ENCODE measurements at regions of chr7 and their contacts with region 1.

Region 1: DNA sequence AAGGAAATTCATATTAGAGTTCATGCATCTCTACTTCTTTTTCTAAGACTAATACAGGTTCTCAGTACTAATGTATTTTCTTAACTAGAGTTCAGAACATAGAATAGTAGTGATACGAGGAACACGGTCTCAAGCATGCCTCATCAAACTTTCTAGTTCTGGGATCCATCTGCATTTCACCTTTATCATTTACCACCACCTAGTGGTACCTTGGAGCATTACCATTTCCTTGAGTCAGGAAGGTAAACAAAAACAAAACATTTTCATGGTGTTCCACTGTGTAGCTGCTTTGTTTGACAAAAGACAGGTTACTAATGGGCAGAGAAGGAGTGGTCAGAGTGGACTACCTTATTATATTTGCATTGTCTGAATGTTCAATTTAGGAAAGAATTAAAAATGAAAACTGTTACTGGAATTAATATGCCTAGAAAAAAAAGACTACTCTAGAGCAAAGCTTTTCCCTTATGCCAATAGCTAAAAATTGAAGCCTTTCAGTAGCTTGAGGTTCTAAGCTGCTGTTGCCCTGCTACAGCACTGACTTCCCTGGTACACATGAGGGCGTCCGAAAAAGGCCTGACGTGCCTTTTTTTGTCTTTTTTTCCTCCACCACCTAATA is 44.5 kb downstream of the STARD3NL start:
- DNase-seq: peak; percentile 57
- ATAC-seq: peak; percentile 56
- H3K4me3 Mint-ChIP-seq: no peak overlapping the region
- H3K27ac Mint-ChIP-seq: no peak overlapping the region
- H3K4me1 Mint-ChIP-seq: peaks cover 76% of the 10 kb centered on the region
- H3K27me3 Mint-ChIP-seq: no peaks in the 10 kb centered on the region

Region 2: GRCh38 chr7:38360776-38361175 is 138.2 kb after region 1 on chr7:
- CTCF ChIA-PET with region 1: interaction called, 346 read pairs
- POLR2A ChIA-PET with region 1: interaction called, 4 read pairs
- DNase-seq: no peak
- ATAC-seq: no peak
- H3K4me3 Mint-ChIP-seq: peak overlapping the region; percentile 91
- H3K27ac Mint-ChIP-seq: peak overlapping the region; percentile 28
- H3K4me1 Mint-ChIP-seq: peaks cover 63% of the 10 kb centered on the region
- H3K27me3 Mint-ChIP-seq: no peaks in the 10 kb centered on the region